ENCODE measurements at regions of chr1 and their contacts with region 1.

Region 1: DNA sequence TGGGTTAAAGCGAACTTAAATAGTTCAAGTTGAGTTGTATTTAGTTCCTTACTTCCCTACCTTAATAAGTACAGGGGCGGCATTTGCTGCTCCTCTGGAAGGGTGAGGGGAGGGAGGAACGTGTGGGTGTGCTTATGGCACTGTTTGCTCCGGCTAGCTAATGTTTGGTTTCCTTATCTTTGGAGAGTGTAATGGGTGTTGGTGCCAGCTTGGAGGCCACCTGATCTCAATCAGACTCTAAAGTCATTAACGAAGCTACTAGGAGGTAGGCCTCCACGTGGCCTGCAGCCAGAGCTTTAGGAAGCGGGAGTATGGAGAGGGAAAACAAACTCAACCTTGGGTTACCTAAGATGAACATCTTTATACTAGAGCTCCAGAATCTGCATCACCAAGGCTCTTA is 43.1 kb upstream of the RAP1A start:
- DNase-seq: no peak
- ATAC-seq: no peak
- H3K4me3 ChIP-seq: no peak overlapping the region
- H3K27ac ChIP-seq: no peak overlapping the region
- H3K4me1 ChIP-seq: peaks cover 6% of the 10 kb centered on the region
- H3K27me3 ChIP-seq: no peaks in the 10 kb centered on the region
- CTCF ChIP-seq: no peak

Region 2: DNA sequence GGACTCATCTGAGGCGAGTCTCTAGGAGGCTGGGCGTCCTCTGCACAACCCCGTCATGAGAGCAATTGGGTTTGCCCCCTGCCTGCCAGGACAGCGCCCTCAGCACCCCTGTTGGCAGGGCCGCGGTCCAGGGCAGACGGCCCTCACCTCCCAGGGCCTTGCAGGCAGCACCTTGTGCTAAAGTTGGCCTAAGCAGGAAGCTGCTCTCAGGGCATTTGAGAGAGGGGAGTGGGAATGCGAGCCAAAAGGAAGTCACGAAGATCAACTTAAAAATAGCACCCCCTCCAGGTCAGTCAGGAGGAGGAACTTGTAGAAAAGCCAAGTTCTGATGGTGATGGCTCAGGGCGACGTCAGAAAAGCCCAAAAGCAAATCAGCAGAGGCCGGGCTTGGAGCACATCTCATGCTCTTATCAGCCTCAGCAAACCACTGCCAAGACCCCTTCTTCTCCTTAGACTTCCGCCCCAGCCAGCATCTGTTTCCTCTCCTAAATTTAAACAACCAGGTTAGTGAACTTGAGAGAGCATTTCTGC is 60.5 kb before region 1 on chr1:
- intact Hi-C with region 1: loop called in 1 of 2 experiments (anchors 5 kb)
- DNase-seq: peak; percentile 25 to 58
- ATAC-seq: peak; percentile 31 to 70 (median 58)
- H3K4me3 ChIP-seq: peak overlapping the region; percentile 61
- H3K27ac ChIP-seq: peak overlapping the region; percentile 62
- H3K4me1 ChIP-seq: no peaks in the 10 kb centered on the region
- H3K27me3 ChIP-seq: peaks cover 0 to 2% (median 0%) of the 10 kb centered on the region in 3 donors
- CTCF ChIP-seq: peak; percentile 14

Region 3: DNA sequence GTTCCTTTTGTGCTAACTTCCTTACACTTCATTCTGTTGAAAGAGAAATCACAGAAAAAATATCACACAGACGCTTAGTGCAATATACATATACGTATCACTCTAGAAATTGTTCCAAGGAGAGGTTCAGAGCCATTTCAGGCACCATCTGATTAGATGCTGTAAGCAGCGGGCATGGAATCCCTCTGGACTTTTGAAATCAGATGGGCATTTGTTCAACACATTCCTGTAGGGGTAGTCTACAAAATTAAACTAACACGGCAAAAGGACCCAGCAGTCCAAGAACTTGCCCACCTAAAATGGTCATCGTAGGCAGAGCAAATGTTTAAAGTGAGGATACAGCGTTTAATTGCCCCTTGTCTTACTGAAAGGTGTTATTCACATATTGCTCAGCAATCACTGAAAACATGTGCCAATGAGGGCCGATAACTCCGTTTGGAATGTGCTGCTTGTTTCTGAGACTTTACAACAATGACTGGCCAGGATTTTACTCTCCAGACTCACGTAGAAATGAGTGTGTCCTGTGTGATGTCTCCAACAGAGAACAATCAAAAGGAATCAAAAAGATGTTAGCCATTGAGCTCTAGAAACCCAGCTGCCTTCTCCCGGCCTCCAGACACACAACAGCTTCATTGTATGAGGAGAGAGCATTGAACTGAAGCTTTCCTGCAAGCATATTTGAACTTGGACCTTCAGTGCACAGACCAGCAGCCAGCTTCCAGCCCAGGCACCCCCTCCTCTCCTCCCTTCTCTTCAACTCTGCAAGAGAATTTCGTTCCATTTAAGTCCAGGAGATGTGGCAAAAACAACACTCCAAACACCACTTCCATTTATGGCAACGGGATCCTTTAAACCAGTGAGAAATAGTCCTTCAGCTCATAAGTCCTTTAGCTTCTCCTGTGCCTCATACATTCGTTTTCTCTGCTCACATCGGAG is 41.0 kb before region 1 on chr1:
- intact Hi-C with region 1: no loop called
- DNase-seq: no peak
- ATAC-seq: no peak
- H3K4me3 ChIP-seq: no peak overlapping the region
- H3K27ac ChIP-seq: peak overlapping the region; percentile 26
- H3K4me1 ChIP-seq: no peaks in the 10 kb centered on the region
- H3K27me3 ChIP-seq: peaks cover 0 to 2% (median 0%) of the 10 kb centered on the region in 3 donors
- CTCF ChIP-seq: no peak

Region 4: GRCh38 chr1:111592389-111593361 is 16.1 kb after region 1 on chr1:
- intact Hi-C with region 1: no loop called
- DNase-seq: peak; percentile 86 to 96
- ATAC-seq: peak; percentile 94 to 99 (median 96)
- H3K4me3 ChIP-seq: peak overlapping the region; percentile 33
- H3K27ac ChIP-seq: peak overlapping the region; percentile 87
- H3K4me1 ChIP-seq: peaks cover 25% of the 10 kb centered on the region
- H3K27me3 ChIP-seq: no peaks in the 10 kb centered on the region
- CTCF ChIP-seq: no peak